GM12878 (cell line): ENCODE measurements at regions of chr11 and their contacts with region 1.

Region 1: DNA sequence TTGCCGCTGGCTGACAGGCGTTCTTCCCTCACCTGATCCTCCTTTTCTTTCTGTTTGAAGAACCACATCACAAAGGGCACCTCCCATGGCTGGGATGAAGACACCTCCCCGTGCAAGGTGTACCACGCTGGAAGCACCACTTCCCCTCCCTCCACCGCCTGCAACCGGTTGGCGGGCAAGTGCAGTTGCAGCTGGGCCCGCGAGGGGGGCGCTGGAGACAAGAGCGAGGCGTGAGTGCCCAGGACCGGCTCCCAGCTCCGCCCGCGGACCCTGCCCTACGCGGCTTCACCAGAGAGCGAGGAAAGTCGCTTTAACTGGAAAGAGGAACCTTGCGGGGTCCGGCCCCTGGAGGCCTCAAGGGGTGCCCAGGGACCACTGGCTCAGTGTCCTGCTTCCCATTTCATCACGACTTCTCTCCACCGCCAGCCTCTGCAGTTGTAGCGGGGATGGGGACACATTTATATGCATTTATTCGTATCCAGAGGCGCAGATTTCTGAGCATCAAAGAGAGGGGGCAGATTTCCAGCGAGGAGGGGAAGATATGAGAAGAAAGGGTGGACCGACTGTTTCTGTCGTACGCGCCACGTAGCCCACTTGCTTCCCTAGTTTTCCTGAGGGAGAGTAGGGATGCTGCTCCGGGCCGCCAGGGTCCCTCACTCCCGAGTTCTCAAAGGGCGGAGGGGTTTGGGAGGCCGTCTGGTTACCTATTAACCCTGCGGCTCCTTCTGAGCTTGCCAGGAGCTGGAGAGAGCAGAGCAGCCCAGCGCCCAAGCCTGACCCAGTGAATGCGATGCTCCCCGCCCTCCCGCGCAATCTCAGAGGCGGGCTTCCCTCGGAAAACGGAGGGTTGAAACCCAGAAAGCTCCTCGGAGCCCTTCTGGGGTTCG is 3.5 kb downstream of the ESAM start:
- DNase-seq: no peak
- ATAC-seq: peak; percentile 75
- H3K4me3 ChIP-seq: peak overlapping the region; percentile 83
- H3K27ac ChIP-seq: 0 out of 2 replicates have a peak overlapping the region, but pooled peaks have one; percentile 10
- H3K4me1 ChIP-seq: peaks cover 18% of the 10 kb centered on the region
- H3K27me3 ChIP-seq: no peaks in the 10 kb centered on the region
- CTCF ChIP-seq: peak; percentile 88 to 89 (median 89)
- EP300 ChIP-seq: no peak
- POLR2A ChIP-seq: 0 out of 2 replicates have a peak, but pooled peaks have one; percentile 28
- RAD21 ChIP-seq: peak; percentile 57

Region 2: GRCh38 chr11:124644426-124645280 is 113.9 kb before region 1 on chr11:
- CTCF ChIA-PET with region 1: interaction called, 26 read pairs
- POLR2A ChIA-PET with region 1: no interaction called
- RAD21 ChIA-PET with region 1: interaction called, 5 read pairs
- SMC1A ChIA-PET with region 1: interaction called, 4 read pairs
- in situ Hi-C with region 1: no loop called
- intact Hi-C with region 1: loop called (anchors 1 kb)
- DNase-seq: no peak
- ATAC-seq: peak; percentile 71
- H3K4me3 ChIP-seq: no peak overlapping the region
- H3K27ac ChIP-seq: no peak overlapping the region
- H3K4me1 ChIP-seq: no peaks in the 10 kb centered on the region; the same call in 1 of the 2 replicates
- H3K27me3 ChIP-seq: no peaks in the 10 kb centered on the region
- CTCF ChIP-seq: peak; percentile 72 to 89 (median 77)
- EP300 ChIP-seq: no peak
- POLR2A ChIP-seq: no peak
- RAD21 ChIP-seq: peak; percentile 77

Region 3: GRCh38 chr11:124739479-124740276 is 18.9 kb before region 1 on chr11 and contains the start of gene NRGN:
- CTCF ChIA-PET with region 1: interaction called, 202 read pairs
- POLR2A ChIA-PET with region 1: interaction called, 4 read pairs
- RAD21 ChIA-PET with region 1: interaction called, 3 read pairs
- SMC1A ChIA-PET with region 1: interaction called, 91 read pairs
- in situ Hi-C with region 1: no loop called
- intact Hi-C with region 1: no loop called
- DNase-seq: no peak
- ATAC-seq: peak; percentile 99
- H3K4me3 ChIP-seq: peak within 1 kb of the TSS; percentile 81
- H3K27ac ChIP-seq: no peak within 1 kb of the TSS
- H3K4me1 ChIP-seq: peaks cover 10% of the 10 kb centered on the region
- H3K27me3 ChIP-seq: peaks cover 2 to 3% of the 10 kb centered on the region in 2 experiments; a peak in 1 of 4 replicates
- CTCF ChIP-seq: no peak
- EP300 ChIP-seq: no peak
- POLR2A ChIP-seq: 0 out of 2 replicates have a peak, but pooled peaks have one; percentile 45
- RAD21 ChIP-seq: no peak
- polyA plus RNA-seq, gene NRGN: not detected

Region 4: DNA sequence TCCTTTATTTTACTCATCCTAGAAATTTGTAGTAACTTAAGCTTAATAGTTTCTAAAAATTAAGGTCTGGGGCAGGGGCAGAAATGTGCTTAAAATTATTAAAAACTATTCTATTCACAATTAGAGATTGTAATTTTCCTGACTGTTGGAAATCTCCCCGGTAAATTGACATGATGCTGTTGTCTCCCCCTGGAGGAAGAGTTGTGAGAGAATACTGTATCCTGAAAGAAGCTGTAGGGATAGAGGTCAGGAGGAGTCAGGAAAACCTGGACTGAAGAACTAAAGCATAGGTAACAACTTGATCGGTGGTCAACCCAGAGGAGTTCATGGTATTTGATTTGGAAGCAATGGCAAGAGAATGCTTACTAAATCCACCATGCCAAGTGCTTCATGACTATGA is 19.7 kb after region 1 on chr11:
- CTCF ChIA-PET with region 1: interaction called, 28 read pairs
- POLR2A ChIA-PET with region 1: no interaction called
- RAD21 ChIA-PET with region 1: interaction called, 3 read pairs
- SMC1A ChIA-PET with region 1: interaction called, 7 read pairs
- in situ Hi-C with region 1: no loop called
- intact Hi-C with region 1: no loop called
- DNase-seq: no peak
- ATAC-seq: no peak
- H3K4me3 ChIP-seq: no peak overlapping the region
- H3K27ac ChIP-seq: no peak overlapping the region
- H3K4me1 ChIP-seq: no peaks in the 10 kb centered on the region
- H3K27me3 ChIP-seq: no peaks in the 10 kb centered on the region
- CTCF ChIP-seq: no peak
- EP300 ChIP-seq: no peak
- POLR2A ChIP-seq: no peak
- RAD21 ChIP-seq: no peak

Region 5: GRCh38 chr11:124837491-124837856 is 78.9 kb after region 1 on chr11:
- CTCF ChIA-PET with region 1: interaction called, 7 read pairs
- POLR2A ChIA-PET with region 1: no interaction called
- RAD21 ChIA-PET with region 1: interaction called, 13 read pairs
- SMC1A ChIA-PET with region 1: interaction called, 10 read pairs
- in situ Hi-C with region 1: no loop called
- intact Hi-C with region 1: loop called (anchors 1 kb)
- DNase-seq: peak; percentile 2
- ATAC-seq: peak; percentile 67
- H3K4me3 ChIP-seq: no peak overlapping the region
- H3K27ac ChIP-seq: no peak overlapping the region
- H3K4me1 ChIP-seq: no peaks in the 10 kb centered on the region
- H3K27me3 ChIP-seq: peaks cover 16 to 17% of the 10 kb centered on the region in 2 experiments
- CTCF ChIP-seq: peak; percentile 41 to 60 (median 54)
- EP300 ChIP-seq: no peak
- POLR2A ChIP-seq: no peak
- RAD21 ChIP-seq: peak; percentile 46

Region 6: GRCh38 chr11:124875943-124876817 is 117.6 kb after region 1 on chr11:
- CTCF ChIA-PET with region 1: no interaction called
- POLR2A ChIA-PET with region 1: no interaction called
- RAD21 ChIA-PET with region 1: no interaction called
- SMC1A ChIA-PET with region 1: no interaction called
- in situ Hi-C with region 1: no loop called
- intact Hi-C with region 1: no loop called
- DNase-seq: peak; percentile 5
- ATAC-seq: peak; percentile 98
- H3K4me3 ChIP-seq: peak overlapping the region; percentile 78
- H3K27ac ChIP-seq: no peak overlapping the region
- H3K4me1 ChIP-seq: no peaks in the 10 kb centered on the region
- H3K27me3 ChIP-seq: peaks cover 0 to 1% of the 10 kb centered on the region in 2 experiments; a peak in 3 of 4 replicates
- CTCF ChIP-seq: peak; percentile 69 to 81 (median 80)
- EP300 ChIP-seq: no peak
- POLR2A ChIP-seq: peak; percentile 65
- RAD21 ChIP-seq: no peak